ENCODE measurements at regions of chr5 and their contacts with region 1.

Region 1: GRCh38 chr5:115309751-115310370 is 13.4 kb upstream of the CCDC112 start:
- DNase-seq: no peak
- ATAC-seq: no peak

Region 2: GRCh38 chr5:115349020-115349817 is 39.4 kb after region 1 on chr5:
- intact Hi-C with region 1: no loop called
- DNase-seq: no peak
- ATAC-seq: peak; percentile 95

Region 3: DNA sequence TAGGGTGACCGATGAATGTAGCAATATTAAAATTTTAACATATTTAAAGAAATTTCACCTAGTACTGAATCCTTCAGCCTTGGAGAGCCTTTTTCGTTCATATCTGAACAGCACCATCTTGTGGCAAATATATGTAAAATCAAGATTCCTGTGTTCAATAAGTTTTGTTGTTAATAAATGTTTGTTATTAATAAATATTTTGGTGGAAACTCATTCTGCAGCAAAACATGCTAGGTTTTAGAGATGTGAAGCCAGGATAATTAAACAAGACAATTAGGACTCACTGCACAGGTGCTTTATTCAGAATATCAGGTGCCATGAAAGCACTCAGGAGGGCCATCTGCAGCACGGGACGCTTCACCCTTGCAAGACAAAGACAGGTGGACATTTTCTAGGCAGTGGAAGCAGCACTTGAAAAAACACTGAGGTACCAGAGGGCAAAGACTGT is 276.8 kb after region 1 on chr5:
- intact Hi-C with region 1: loop called (anchors 10 kb)
- DNase-seq: no peak
- ATAC-seq: no peak